ENCODE measurements at regions of chr16 and their contacts with region 1.

Region 1: DNA sequence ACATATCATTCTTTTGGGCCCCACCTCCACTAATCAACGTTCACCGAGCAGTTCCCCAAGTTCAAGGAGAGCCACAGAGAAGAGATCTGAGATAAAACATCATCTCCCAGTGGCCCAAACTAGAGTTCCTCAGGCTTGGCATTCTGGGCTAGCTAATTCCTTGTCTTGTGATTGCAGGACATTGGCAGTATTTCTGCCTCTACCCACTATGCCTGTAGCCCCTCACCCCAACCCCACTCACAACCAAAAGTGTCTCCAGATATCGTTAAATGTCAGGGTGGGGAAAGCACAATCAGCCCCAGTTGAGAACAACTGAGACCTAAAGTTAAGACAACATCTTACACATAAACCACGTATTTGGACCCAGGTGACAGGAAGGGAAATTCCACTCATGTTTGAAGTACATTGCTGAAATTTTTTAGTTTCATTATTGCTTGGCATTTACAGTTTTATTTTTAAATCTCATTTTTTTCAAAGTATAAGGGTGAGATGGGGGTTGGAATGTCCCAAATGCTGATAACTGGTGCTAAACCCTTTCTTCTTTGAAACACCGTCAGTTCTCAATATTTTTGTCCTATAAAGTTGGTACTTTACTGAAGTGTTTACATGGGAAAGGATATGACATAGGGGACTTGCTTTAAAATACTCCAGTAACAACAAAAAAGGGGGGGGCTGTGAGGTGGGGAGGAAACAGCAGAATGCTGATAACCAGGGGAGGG is 13.6 kb downstream of the ZC3H7A start:
- DNase-seq: peak; percentile 53
- H3K4me3 Mint-ChIP-seq: peak overlapping the region; percentile 80
- H3K27ac Mint-ChIP-seq: peak overlapping the region; percentile 99
- H3K4me1 Mint-ChIP-seq: peaks cover 52% of the 10 kb centered on the region
- H3K27me3 Mint-ChIP-seq: no peaks in the 10 kb centered on the region

Region 2: DNA sequence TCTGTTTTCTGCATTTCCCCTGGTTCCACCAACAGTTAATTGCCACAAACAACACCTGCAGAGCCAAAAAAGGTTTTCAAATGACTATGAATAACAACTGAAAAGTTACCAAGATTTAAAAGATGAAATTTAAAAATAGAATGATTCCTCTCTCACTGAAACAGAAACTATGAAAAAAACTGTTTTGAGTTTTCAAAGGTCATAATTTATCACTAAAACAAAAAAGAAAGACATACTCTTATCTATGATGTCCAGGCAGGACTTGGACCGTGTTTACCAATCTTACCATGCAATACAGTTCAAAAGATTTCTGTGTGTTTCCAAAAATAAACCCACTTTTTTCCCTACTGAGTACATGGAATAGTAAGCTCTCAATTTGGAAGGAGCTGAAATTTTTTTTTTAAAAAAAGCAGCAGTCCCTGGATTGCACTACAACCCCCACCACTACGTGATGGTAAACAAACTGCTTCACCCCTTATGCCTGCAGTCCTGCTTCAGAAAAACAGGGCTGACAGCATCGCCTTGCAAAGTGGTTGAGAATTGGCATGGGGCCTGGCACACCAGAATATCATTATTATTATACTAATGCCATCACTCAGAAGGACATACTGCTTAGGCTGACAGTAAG is 49.3 kb before region 1 on chr16:
- intact Hi-C with region 1: loop called (anchors 1 kb)
- DNase-seq: no peak
- H3K4me3 Mint-ChIP-seq: peak overlapping the region; percentile 33
- H3K27ac Mint-ChIP-seq: peak overlapping the region; percentile 75
- H3K4me1 Mint-ChIP-seq: peaks cover 77% of the 10 kb centered on the region
- H3K27me3 Mint-ChIP-seq: no peaks in the 10 kb centered on the region

Region 3: GRCh38 chr16:11757671-11758545 is 25.6 kb before region 1 on chr16:
- intact Hi-C with region 1: no loop called
- DNase-seq: no peak
- H3K4me3 Mint-ChIP-seq: no peak overlapping the region
- H3K27ac Mint-ChIP-seq: no peak overlapping the region
- H3K4me1 Mint-ChIP-seq: no peaks in the 10 kb centered on the region
- H3K27me3 Mint-ChIP-seq: no peaks in the 10 kb centered on the region

Region 4: GRCh38 chr16:11797166-11797956 is 13.9 kb after region 1 on chr16 and contains the start of gene ZC3H7A:
- intact Hi-C with region 1: loop called (anchors 1 kb)
- DNase-seq: peak; percentile 94
- H3K4me3 Mint-ChIP-seq: peak within 1 kb of the TSS; percentile 93
- H3K27ac Mint-ChIP-seq: peak within 1 kb of the TSS; percentile 96
- H3K4me1 Mint-ChIP-seq: peaks cover 67% of the 10 kb centered on the region
- H3K27me3 Mint-ChIP-seq: no peaks in the 10 kb centered on the region
- total RNA-seq, gene ZC3H7A: 63.4 and 71.1 TPM in 2 replicates

Measured in activated T-helper 2 cell treated with anti-CD3 and anti-CD28 coated beads, Interferon-gamma antibody, Interleukin-2, Interleukin-4, amounts not matched to agents 10 μg/mL and 5 μg/mL and 100 μg/mL, durations not matched to agents 14 hours and 24 hours and 36 hours (primary cell).